GM18951 (cell line): ENCODE measurements at regions of chr1 and their contacts with region 1.

Region 1: GRCh38 chr1:235415008-235415904 is 48.0 kb downstream of the TBCE start:
- POLR2A ChIP-seq: no peak

Region 2: DNA sequence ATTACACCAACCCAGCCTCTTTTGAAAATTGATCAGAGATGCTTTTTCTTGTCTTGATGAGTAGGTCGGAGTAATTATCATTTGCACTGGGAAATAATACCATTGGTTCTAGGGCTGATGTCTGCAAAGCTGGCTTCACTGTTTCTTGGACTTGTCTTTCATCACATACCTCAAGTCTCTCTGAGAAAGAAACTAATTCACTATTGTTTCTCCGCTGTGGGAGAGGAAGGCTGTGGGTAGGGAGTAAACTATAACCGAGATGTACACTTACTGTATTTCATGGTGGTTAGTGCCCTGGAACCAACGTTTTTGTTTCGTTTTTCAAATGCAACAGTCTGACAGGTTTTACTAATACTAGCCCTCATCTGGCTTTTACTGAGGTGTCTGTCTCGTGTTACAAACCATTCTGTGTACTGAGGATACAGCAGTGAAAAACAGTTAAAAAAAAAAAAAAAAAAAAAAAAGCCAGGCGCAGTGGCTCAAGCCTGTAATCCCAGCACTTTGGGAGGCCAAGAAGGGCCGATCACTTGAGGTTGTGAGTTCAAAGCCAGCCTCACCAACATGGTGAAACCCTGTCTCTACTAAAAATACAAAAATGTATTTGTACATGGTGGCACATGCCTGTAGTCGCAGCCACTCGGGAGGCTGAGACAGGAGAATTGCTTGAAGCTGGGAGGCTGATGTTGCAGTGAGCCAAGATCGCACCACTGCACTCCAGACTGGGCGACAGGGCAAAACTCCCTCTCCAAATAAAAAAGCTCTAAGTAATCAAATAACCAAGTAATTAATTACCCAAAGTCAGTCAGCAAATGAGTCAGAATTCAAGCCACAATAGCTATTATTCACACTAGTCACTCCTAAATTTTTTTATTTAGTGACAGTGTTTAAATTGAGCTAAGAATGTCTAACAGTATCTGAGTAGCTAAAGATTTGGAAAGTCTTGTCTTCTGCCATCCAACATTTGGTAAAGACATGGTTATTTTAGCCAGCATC is 309.9 kb before region 1 on chr1:
- in situ Hi-C with region 1: loop called (anchors 10 kb)
- POLR2A ChIP-seq: no peak

Region 3: GRCh38 chr1:235246022-235246991 is 168.9 kb before region 1 on chr1:
- in situ Hi-C with region 1: loop called (anchors 5 kb)
- POLR2A ChIP-seq: no peak